Activated CD4-positive, alpha-beta memory T cell treated with anti-CD3 and anti-CD28 coated beads, Interleukin-2, amount 10 ng/mL, durations not matched to agents 7 days and 5 days (primary cell): ENCODE measurements at regions of chr16 and their contacts with region 1.

Region 1: DNA sequence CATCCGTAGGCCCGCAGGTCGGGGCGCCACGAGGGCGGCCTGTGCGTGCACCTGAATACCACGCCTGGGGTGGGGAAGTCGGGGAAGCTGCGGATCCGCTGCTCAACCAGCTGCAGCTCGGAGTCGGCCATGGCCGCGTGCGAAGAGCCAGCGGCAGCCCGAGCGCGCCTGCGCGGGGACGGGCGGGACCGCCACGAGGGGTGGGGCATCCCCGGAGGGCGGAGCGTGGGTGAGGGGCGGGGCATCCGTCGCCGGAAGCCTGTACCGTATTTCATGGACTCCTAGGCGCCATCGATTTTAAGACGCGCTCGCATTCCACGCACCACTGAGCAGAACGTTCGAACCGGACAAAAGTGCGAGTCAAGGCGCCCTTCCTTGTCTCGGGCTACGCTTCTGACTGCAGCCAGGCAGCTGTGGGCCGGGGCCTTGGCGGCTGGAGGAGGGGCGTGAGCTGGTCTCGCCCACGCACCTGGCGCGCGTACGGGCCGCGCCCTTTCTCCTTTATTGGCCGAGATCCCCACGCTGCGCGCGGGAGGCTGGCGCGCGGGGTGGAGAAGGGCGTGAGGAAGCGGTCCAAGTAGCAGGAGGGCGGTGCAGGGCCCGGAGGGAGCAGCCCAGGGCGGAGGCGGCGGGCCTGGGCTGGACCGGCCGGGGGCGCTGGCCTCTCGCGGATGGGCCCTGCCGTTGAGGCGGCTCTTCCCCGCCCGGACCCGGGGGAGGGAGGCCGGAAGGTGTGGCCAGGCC is at the start of gene APRT:
- DNase-seq: peak; percentile 97
- H3K4me3 Mint-ChIP-seq: peak within 1 kb of the TSS; percentile 92
- H3K27ac Mint-ChIP-seq: peak within 1 kb of the TSS; percentile 99
- H3K4me1 Mint-ChIP-seq: peaks cover 33% of the 10 kb centered on the region
- H3K27me3 Mint-ChIP-seq: no peaks in the 10 kb centered on the region
- total RNA-seq, gene APRT: 129 to 136 TPM

Region 2: DNA sequence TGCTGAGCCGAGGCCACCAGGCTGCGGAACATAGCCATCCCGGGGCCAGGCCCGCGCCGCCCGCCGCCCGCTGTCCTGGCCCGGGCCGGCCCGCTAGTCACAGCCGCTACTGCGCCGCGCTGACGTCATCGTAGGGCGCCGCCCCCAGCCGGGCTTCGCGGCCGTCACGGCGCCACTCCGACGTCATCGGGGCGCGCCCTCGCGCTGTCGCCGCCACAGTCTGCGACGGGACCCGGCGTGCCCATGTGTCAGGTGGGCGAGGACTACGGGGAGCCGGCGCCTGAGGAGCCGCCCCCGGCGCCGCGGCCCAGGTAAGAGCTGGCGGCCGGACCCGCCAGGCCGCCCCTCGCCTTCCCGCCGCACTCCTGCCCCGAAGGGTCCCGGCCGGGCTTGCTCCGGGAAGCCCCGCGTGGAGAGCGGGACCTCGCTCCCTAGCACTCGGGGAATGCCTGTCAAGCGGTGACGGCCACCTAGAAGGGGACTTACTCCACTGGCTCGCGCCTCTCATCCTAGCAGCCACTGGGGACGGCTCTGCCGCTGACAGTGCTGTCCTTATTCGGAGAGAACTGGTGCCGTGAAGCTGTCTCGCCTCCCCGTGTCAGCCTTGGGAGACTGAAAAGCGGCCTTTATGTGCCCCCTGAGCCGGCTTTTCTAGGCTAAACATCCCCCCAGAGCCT is 105.5 kb before region 1 on chr16 and contains the starts of genes CTU2 and RNF166:
- CTCF ChIA-PET with region 1: no interaction called
- POLR2A ChIA-PET with region 1: interaction called, 54 read pairs
- DNase-seq: peak; percentile 93
- H3K4me3 Mint-ChIP-seq: peak within 1 kb of the TSS; percentile 95
- H3K27ac Mint-ChIP-seq: peak within 1 kb of the TSS; percentile 98
- H3K4me1 Mint-ChIP-seq: peaks cover 44% of the 10 kb centered on the region
- H3K27me3 Mint-ChIP-seq: no peaks in the 10 kb centered on the region
- total RNA-seq, gene CTU2: 16.5 to 17.3 TPM
- total RNA-seq, gene RNF166: 155 to 156 TPM

Region 3: GRCh38 chr16:88838991-88839529 is 27.1 kb after region 1 on chr16:
- CTCF ChIA-PET with region 1: no interaction called
- POLR2A ChIA-PET with region 1: no interaction called
- DNase-seq: no peak
- H3K4me3 Mint-ChIP-seq: no peak overlapping the region
- H3K27ac Mint-ChIP-seq: no peak overlapping the region
- H3K4me1 Mint-ChIP-seq: peaks cover 7% of the 10 kb centered on the region
- H3K27me3 Mint-ChIP-seq: no peaks in the 10 kb centered on the region

Region 4: GRCh38 chr16:88856828-88857733 is 45.1 kb after region 1 on chr16 and contains the starts of genes GALNS and TRAPPC2L:
- CTCF ChIA-PET with region 1: interaction called, 36 read pairs
- POLR2A ChIA-PET with region 1: interaction called, 59 read pairs
- DNase-seq: peak; percentile 99
- H3K4me3 Mint-ChIP-seq: peak within 1 kb of the TSS; percentile 97
- H3K27ac Mint-ChIP-seq: peak within 1 kb of the TSS; percentile 82
- H3K4me1 Mint-ChIP-seq: peaks cover 33% of the 10 kb centered on the region
- H3K27me3 Mint-ChIP-seq: no peaks in the 10 kb centered on the region
- total RNA-seq, gene GALNS: 35.2 to 38.2 TPM
- total RNA-seq, gene TRAPPC2L: 44.9 to 45.8 TPM

Region 5: GRCh38 chr16:89217388-89218191 is 405.6 kb after region 1 on chr16 and contains the start of gene ZNF778:
- CTCF ChIA-PET with region 1: interaction called, 10 read pairs
- POLR2A ChIA-PET with region 1: interaction called, 6 read pairs
- DNase-seq: peak; percentile 85
- H3K4me3 Mint-ChIP-seq: peak within 1 kb of the TSS; percentile 89
- H3K27ac Mint-ChIP-seq: peak within 1 kb of the TSS; percentile 75
- H3K4me1 Mint-ChIP-seq: peaks cover 24% of the 10 kb centered on the region
- H3K27me3 Mint-ChIP-seq: no peaks in the 10 kb centered on the region
- total RNA-seq, gene ZNF778: 6.6 to 6.8 TPM